ENCODE measurements at regions of chr2 and their contacts with region 1.

Region 1: GRCh38 chr2:196131384-196131937 is 39.9 kb downstream of the STK17B start:
- DNase-seq: no peak
- ATAC-seq: peak; percentile 44
- H3K4me3 Mint-ChIP-seq: no peak overlapping the region
- H3K27ac Mint-ChIP-seq: peak overlapping the region; percentile 46
- H3K4me1 Mint-ChIP-seq: no peaks in the 10 kb centered on the region
- H3K27me3 Mint-ChIP-seq: no peaks in the 10 kb centered on the region
- CTCF ChIP-seq: no peak

Region 2: GRCh38 chr2:196337208-196337953 is 205.9 kb after region 1 on chr2:
- CTCF ChIA-PET with region 1: interaction called, 8 read pairs
- POLR2A ChIA-PET with region 1: no interaction called
- intact Hi-C with region 1: loop called (anchors 1 kb)
- DNase-seq: no peak
- ATAC-seq: peak; percentile 53
- H3K4me3 Mint-ChIP-seq: no peak overlapping the region
- H3K27ac Mint-ChIP-seq: peak overlapping the region; percentile 5
- H3K4me1 Mint-ChIP-seq: peaks cover 20% of the 10 kb centered on the region
- H3K27me3 Mint-ChIP-seq: no peaks in the 10 kb centered on the region
- CTCF ChIP-seq: no peak

Region 3: GRCh38 chr2:196453613-196454047 is 322.2 kb after region 1 on chr2:
- CTCF ChIA-PET with region 1: interaction called, 12 read pairs
- POLR2A ChIA-PET with region 1: no interaction called
- intact Hi-C with region 1: loop called (anchors 1 kb)
- DNase-seq: no peak
- ATAC-seq: peak; percentile 65
- H3K4me3 Mint-ChIP-seq: no peak overlapping the region
- H3K27ac Mint-ChIP-seq: no peak overlapping the region
- H3K4me1 Mint-ChIP-seq: no peaks in the 10 kb centered on the region
- H3K27me3 Mint-ChIP-seq: peaks cover 9% of the 10 kb centered on the region
- CTCF ChIP-seq: no peak

Measured in activated B cell treated with CpG ODN at 0.5 μM for 24 hours (primary cell).